ENCODE measurements at regions of chr19 and their contacts with region 1.

Region 1: GRCh38 chr19:7799640-7800355 is 30.2 kb upstream of the EVI5L start:
- DNase-seq: peak; percentile 41 to 88
- H3K4me3 ChIP-seq: peak overlapping the region; percentile 23 to 55 (median 32); a peak in 7 of 8 replicates
- H3K27ac ChIP-seq: no peak overlapping the region
- H3K4me1 ChIP-seq: peaks cover 0 to 3% (median 1%) of the 10 kb centered on the region in 4 experiments; a peak in 2 of 7 replicates
- H3K27me3 ChIP-seq: peaks cover 0 to 2% (median 0%) of the 10 kb centered on the region in 4 experiments; a peak in 1 of 7 replicates
- CTCF ChIP-seq: peak in 2 of 3 experiments; percentile 44 to 68; a peak in 3 of 4 replicates
- EP300 ChIP-seq: no peak
- POLR2A ChIP-seq: 0 out of 3 replicates have a peak, but pooled peaks of 1 of the 2 experiments have one; percentile 47
- RAD21 ChIP-seq: peak; percentile 76 to 79

Region 2: GRCh38 chr19:7789447-7789846 is 10.4 kb before region 1 on chr19:
- CTCF ChIA-PET with region 1: interaction called, 14 read pairs
- POLR2A ChIA-PET with region 1: interaction called, 13 read pairs
- DNase-seq: peak in 1 of 2 experiments; percentile 89
- H3K4me3 ChIP-seq: peak overlapping the region; percentile 23 to 62 (median 47)
- H3K27ac ChIP-seq: no peak overlapping the region
- H3K4me1 ChIP-seq: peaks cover 0 to 19% (median 12%) of the 10 kb centered on the region in 4 experiments; a peak in 6 of 7 replicates
- H3K27me3 ChIP-seq: peaks cover 13 to 35% (median 29%) of the 10 kb centered on the region in 4 experiments
- CTCF ChIP-seq: no peak
- EP300 ChIP-seq: no peak
- POLR2A ChIP-seq: no peak
- RAD21 ChIP-seq: no peak

Region 3: DNA sequence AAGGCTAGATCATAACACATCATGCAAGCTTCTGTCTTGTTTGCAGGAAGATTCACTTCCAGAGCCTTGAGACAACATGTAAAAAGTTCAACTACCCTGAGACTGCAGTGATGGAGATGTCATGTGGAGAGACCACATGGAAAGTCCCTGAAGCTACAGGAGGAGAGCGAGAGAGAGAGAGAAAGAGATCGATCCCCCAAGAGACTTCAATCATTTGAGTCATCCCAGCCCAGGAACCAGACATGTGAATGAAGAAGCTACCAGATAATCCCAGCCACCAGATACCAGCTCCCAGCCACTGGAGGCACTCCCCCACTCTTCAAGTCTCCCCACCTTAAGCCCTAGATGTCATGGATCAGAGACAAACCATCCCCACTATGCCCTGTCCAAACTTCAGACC is 19.5 kb after region 1 on chr19:
- CTCF ChIA-PET with region 1: interaction called, 13 read pairs
- POLR2A ChIA-PET with region 1: interaction called, 3 read pairs
- DNase-seq: no peak
- H3K4me3 ChIP-seq: no peak overlapping the region
- H3K27ac ChIP-seq: no peak overlapping the region
- H3K4me1 ChIP-seq: no peaks in the 10 kb centered on the region
- H3K27me3 ChIP-seq: no peaks in the 10 kb centered on the region; a peak in 1 of 7 replicates
- CTCF ChIP-seq: no peak
- EP300 ChIP-seq: no peak
- POLR2A ChIP-seq: no peak
- RAD21 ChIP-seq: no peak